ENCODE measurements at regions of chr6 and their contacts with region 1.

Region 1: DNA sequence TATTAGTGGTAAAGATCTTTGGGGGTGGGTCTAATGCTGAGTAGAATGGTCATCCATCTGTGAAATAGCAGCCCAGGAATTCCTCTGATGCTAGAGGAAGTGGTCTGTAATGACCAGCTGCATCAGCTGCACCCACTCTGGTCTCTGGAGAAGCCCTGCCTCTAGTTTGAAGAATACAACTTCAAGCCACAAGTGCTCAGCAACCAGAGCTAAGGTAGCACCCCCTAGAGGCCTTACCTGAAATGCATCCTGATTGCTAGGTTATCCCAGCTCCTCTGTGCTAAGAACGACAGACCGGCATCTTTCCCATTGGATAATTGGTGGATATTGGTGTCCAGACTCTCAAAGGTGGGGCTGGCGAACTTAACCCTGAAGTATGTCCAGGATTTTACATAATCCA is 58.2 kb downstream of the DNAH8 start:
- H3K4me3 ChIP-seq: no peak overlapping the region
- H3K27ac ChIP-seq: no peak overlapping the region
- H3K4me1 ChIP-seq: no peaks in the 10 kb centered on the region
- CTCF ChIP-seq: no peak

Region 2: GRCh38 chr6:38725414-38726183 is 47.7 kb before region 1 on chr6:
- CTCF ChIA-PET with region 1: no interaction called
- POLR2A ChIA-PET with region 1: no interaction called
- H3K4me3 ChIP-seq: no peak overlapping the region
- H3K27ac ChIP-seq: no peak overlapping the region
- H3K4me1 ChIP-seq: peaks cover 6% of the 10 kb centered on the region; the same call in 1 of the 2 replicates
- CTCF ChIP-seq: no peak

Region 3: GRCh38 chr6:38784506-38785235 is 11.3 kb after region 1 on chr6:
- CTCF ChIA-PET with region 1: interaction called, 21 read pairs
- POLR2A ChIA-PET with region 1: no interaction called
- H3K4me3 ChIP-seq: no peak overlapping the region
- H3K27ac ChIP-seq: no peak overlapping the region
- H3K4me1 ChIP-seq: peaks cover 7% of the 10 kb centered on the region; the same call in 1 of the 2 replicates
- CTCF ChIP-seq: no peak

Region 4: DNA sequence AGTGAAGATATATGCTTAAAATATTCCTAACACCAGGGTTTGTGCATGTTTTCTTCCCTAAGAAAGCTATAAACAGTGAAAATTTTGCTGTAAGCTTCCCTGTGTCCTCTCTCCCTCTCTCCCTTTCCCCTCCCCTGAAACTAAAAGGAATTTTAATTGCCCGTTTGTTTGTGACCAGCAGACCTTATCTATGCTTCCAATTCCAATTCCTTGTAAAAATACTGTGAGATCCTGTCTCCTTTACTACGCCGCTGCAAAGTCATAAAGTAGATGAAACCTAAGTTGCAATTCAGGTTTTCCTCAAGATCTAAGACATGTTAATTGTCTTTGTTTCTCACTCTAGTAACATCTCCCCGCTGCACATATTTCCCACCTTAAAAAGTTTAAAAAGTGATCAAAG is 24.1 kb after region 1 on chr6:
- CTCF ChIA-PET with region 1: interaction called, 10 read pairs
- POLR2A ChIA-PET with region 1: interaction called, 5 read pairs
- H3K4me3 ChIP-seq: no peak overlapping the region
- H3K27ac ChIP-seq: no peak overlapping the region
- H3K4me1 ChIP-seq: peaks cover 3% of the 10 kb centered on the region; the same call in 1 of the 2 replicates
- CTCF ChIP-seq: no peak

Measured in HEK293 (cell line).